Calu3 (cell line): ENCODE measurements at regions of chr16 and their contacts with region 1.

Region 1: DNA sequence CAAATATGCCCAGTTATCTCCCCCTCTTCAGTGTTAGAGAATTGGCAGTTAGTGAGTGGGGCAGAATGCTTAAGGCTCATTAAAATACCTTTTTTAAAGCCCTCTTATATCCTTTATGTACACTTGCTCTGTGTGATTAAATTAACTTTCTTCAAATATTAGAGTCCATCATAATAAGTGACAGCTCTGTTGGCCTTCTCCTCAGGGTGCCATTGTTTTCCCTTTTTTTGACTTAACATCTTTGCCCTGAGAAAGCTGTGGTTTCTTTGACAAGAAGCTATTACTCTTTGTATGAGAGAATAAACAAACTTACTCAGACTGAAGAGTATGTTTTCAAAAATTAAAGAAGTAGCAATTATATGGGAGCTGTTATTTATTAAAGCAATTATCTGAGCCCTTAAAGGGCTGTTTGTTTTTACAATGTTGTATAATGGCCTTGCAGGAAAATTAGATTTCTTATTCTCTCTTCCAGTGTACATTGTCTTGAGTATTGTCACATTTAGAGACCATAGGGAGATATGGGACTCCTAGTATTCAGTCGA is 13.4 kb downstream of the RBBP6 start:
- DNase-seq: no peak
- H3K4me3 Mint-ChIP-seq: no peak overlapping the region
- H3K27ac Mint-ChIP-seq: no peak overlapping the region
- H3K4me1 Mint-ChIP-seq: no peaks in the 10 kb centered on the region
- H3K27me3 Mint-ChIP-seq: no peaks in the 10 kb centered on the region
- CTCF ChIP-seq: no peak

Region 2: GRCh38 chr16:24309222-24309905 is 243.4 kb before region 1 on chr16:
- CTCF ChIA-PET with region 1: no interaction called
- intact Hi-C with region 1: no loop called
- DNase-seq: peak; percentile 94
- H3K4me3 Mint-ChIP-seq: no peak overlapping the region
- H3K27ac Mint-ChIP-seq: peak overlapping the region; percentile 10
- H3K4me1 Mint-ChIP-seq: peaks cover 14% of the 10 kb centered on the region
- H3K27me3 Mint-ChIP-seq: peaks cover 62% of the 10 kb centered on the region
- CTCF ChIP-seq: no peak

Region 3: GRCh38 chr16:24516900-24517669 is 35.7 kb before region 1 on chr16:
- CTCF ChIA-PET with region 1: no interaction called
- intact Hi-C with region 1: no loop called
- DNase-seq: peak; percentile 91
- H3K4me3 Mint-ChIP-seq: peak overlapping the region; percentile 36
- H3K27ac Mint-ChIP-seq: no peak overlapping the region
- H3K4me1 Mint-ChIP-seq: peaks cover 14% of the 10 kb centered on the region
- H3K27me3 Mint-ChIP-seq: peaks cover 47% of the 10 kb centered on the region
- CTCF ChIP-seq: peak; percentile 82

Region 4: DNA sequence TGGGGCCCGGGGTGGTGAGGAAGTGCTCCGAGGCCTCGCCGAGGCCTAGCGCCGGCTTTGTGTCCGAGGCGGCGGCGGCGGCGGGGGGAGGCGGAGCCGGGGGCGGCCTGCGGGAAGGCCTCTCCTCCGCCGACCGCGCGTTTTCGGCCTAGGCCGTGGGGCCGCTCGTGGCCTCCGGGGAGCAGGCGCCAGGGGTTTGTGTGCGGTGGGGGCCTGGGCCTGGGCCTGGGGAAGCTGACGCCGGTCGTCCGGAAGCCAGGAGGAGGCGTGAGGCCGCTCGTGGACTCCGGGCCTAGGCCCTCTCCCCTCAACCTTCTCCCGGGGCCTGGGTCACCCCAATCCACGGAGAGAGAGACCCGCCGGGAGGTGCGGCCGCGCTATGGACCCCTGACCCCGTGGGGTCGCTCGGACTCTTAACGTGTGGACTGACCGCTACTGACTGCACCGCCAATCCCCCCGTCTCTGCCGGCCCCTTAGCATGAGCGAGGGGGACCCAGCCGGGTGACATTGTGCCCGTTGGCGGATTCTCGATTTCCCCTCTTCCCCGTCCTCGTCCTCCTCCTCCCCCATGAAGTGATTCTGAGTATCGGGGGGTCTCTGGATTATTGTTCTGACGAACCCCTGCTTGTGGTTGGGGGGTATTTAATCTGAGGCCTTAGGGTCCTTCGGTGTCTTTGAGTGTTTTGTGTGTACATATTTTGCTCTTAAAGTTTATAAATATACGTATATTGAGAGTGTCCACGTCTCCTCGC is 12.8 kb before region 1 on chr16:
- CTCF ChIA-PET with region 1: interaction called, 4 read pairs
- intact Hi-C with region 1: loop called (anchors 1 kb)
- DNase-seq: peak; percentile 64
- H3K4me3 Mint-ChIP-seq: peak overlapping the region; percentile 88
- H3K27ac Mint-ChIP-seq: peak overlapping the region; percentile 90
- H3K4me1 Mint-ChIP-seq: peaks cover 27% of the 10 kb centered on the region
- H3K27me3 Mint-ChIP-seq: no peaks in the 10 kb centered on the region
- CTCF ChIP-seq: no peak

Region 5: DNA sequence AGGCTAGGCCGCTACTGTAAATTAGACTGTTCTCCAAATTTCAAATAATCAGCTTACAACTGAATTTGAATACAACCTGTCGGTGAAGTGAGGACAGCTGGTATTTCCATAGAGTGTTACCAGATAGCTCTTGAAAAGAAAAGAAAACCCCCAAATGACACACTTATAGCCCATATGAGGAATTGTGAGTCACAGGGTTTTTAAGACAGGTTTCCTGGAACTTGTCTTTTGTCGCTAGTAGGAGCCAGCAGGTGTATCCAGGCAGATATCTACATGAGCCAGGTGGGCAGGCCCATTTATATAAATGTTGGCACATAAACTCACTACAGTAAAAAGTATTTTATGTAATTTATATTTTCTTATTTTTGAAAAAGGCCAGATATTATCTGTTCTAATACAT is 200.7 kb after region 1 on chr16:
- CTCF ChIA-PET with region 1: no interaction called
- intact Hi-C with region 1: loop called (anchors 5 kb)
- DNase-seq: no peak
- H3K4me3 Mint-ChIP-seq: no peak overlapping the region
- H3K27ac Mint-ChIP-seq: no peak overlapping the region
- H3K4me1 Mint-ChIP-seq: peaks cover 9% of the 10 kb centered on the region
- H3K27me3 Mint-ChIP-seq: no peaks in the 10 kb centered on the region
- CTCF ChIP-seq: no peak

Region 6: GRCh38 chr16:24800586-24800985 is 247.8 kb after region 1 on chr16:
- CTCF ChIA-PET with region 1: no interaction called
- intact Hi-C with region 1: loop called (anchors 5 kb)
- DNase-seq: peak; percentile 55
- H3K4me3 Mint-ChIP-seq: no peak overlapping the region
- H3K27ac Mint-ChIP-seq: no peak overlapping the region
- H3K4me1 Mint-ChIP-seq: no peaks in the 10 kb centered on the region
- H3K27me3 Mint-ChIP-seq: no peaks in the 10 kb centered on the region
- CTCF ChIP-seq: peak; percentile 39